Activated CD4-positive, alpha-beta memory T cell treated with anti-CD3 and anti-CD28 coated beads for 36 hours (primary cell): ENCODE measurements at regions of chr1 and their contacts with region 1.

Region 1: GRCh38 chr1:154857441-154858215 is 12.5 kb downstream of the KCNN3 start:
- DNase-seq: peak; percentile 68
- H3K4me3 Mint-ChIP-seq: no peak overlapping the region
- H3K27ac Mint-ChIP-seq: no peak overlapping the region
- H3K4me1 Mint-ChIP-seq: peaks cover 32% of the 10 kb centered on the region
- H3K27me3 Mint-ChIP-seq: peaks cover 20% of the 10 kb centered on the region

Region 2: DNA sequence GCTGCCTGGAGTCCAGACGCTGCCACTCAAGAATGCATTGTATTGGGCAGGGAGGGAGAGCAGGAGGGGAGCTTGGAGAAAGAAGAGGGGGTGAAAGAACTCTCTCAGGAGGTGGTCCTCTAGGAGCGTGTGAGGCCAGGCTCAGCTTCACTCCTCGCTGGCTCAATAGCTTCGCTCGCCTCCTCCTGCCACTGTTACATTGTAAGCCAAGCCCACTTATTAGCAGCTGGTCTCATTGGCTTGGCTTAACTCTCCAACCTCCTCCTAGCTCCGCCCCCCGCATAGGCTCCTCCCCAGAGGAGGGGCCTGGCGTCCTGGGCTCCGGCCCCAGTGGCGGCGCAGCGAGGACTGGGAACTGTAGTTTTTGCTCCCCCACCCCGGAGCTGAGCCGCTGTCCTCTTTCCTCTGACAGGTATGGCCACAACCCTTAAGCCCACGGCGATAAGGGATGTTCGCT is 12.5 kb after region 1 on chr1 and contains the start of gene KCNN3:
- CTCF ChIA-PET with region 1: interaction called, 6 read pairs
- POLR2A ChIA-PET with region 1: interaction called, 10 read pairs
- intact Hi-C with region 1: no loop called
- DNase-seq: peak; percentile 82
- H3K4me3 Mint-ChIP-seq: no peak within 1 kb of the TSS
- H3K27ac Mint-ChIP-seq: no peak within 1 kb of the TSS
- H3K4me1 Mint-ChIP-seq: peaks cover 36% of the 10 kb centered on the region
- H3K27me3 Mint-ChIP-seq: peaks cover 44% of the 10 kb centered on the region
- total RNA-seq, gene KCNN3: 0.02 to 0.14 TPM

Region 3: GRCh38 chr1:154974063-154974807 is 116.6 kb after region 1 on chr1 and contains the start of gene CKS1B:
- CTCF ChIA-PET with region 1: no interaction called
- POLR2A ChIA-PET with region 1: no interaction called
- intact Hi-C with region 1: no loop called
- DNase-seq: peak; percentile 98
- H3K4me3 Mint-ChIP-seq: no peak within 1 kb of the TSS
- H3K27ac Mint-ChIP-seq: no peak within 1 kb of the TSS
- H3K4me1 Mint-ChIP-seq: peaks cover 30% of the 10 kb centered on the region
- H3K27me3 Mint-ChIP-seq: no peaks in the 10 kb centered on the region
- total RNA-seq, gene CKS1B: 197 to 205 TPM